ENCODE measurements at regions of chr3 and their contacts with region 1.

Region 1: DNA sequence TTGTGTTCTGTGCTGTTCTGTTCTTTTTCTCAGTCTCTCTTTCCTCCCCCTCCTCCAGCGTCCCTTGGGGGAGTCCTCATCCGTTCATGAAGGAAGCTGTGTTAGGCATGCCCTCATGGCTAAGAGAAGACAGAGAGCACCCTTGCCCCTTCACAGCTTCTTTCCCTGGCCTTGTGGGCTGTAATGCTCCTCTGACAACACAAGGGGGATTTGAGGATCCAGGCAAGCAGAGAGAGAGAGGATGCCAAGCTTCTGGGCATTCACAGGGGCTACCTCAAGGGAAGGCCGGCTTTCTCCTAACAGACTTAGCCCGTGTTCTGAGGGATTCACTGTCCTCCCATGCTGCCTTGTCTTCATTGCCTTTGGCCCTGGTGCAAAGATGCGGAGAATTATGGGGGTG is 389.5 kb downstream of the LRTM1 start:
- DNase-seq: no peak
- H3K4me3 ChIP-seq: no peak overlapping the region
- H3K27ac ChIP-seq: no peak overlapping the region
- H3K4me1 ChIP-seq: no peaks in the 10 kb centered on the region
- H3K27me3 ChIP-seq: no peaks in the 10 kb centered on the region
- CTCF ChIP-seq: no peak
- EP300 ChIP-seq: no peak
- POLR2A ChIP-seq: no peak

Region 2: GRCh38 chr3:54476864-54477263 is 61.5 kb before region 1 on chr3:
- in situ Hi-C with region 1: no loop called
- intact Hi-C with region 1: no loop called
- DNase-seq: no peak
- H3K4me3 ChIP-seq: no peak overlapping the region
- H3K27ac ChIP-seq: no peak overlapping the region
- H3K4me1 ChIP-seq: no peaks in the 10 kb centered on the region
- H3K27me3 ChIP-seq: no peaks in the 10 kb centered on the region
- CTCF ChIP-seq: no peak
- EP300 ChIP-seq: no peak
- POLR2A ChIP-seq: no peak

Region 3: DNA sequence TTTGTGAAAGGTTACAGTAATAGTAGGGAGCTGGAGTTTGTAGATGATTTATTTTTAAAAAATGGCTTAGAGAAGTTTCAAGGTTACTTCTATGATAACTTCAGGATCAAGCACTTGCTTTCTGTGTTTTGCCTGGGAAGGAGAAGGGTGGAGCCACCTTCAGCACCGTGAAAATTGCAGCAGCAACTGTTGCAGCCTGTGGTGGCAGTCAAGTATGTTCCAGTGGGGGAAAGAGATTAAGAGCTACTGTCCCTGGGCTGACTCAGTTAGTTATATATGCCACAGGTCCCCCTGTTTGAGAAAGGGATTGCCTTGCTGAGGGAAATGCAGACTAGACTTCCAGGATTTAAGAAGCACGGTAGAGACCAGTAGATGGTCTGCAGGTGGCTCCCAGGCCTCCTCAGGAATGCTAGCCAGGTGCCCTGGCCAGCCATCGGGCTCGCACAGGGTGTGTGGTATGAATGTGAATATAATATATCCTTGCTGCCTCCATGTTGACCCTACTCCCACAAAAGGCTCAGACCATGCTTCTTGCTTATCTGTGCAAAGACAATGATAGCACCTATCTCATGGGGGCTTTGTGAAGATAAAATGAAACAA is 26.5 kb before region 1 on chr3:
- in situ Hi-C with region 1: no loop called
- intact Hi-C with region 1: loop called (anchors 1 kb)
- DNase-seq: no peak
- H3K4me3 ChIP-seq: no peak overlapping the region
- H3K27ac ChIP-seq: no peak overlapping the region
- H3K4me1 ChIP-seq: no peaks in the 10 kb centered on the region
- H3K27me3 ChIP-seq: no peaks in the 10 kb centered on the region
- CTCF ChIP-seq: no peak
- EP300 ChIP-seq: no peak
- POLR2A ChIP-seq: no peak

Region 4: GRCh38 chr3:54557541-54558419 is 19.4 kb after region 1 on chr3:
- in situ Hi-C with region 1: no loop called
- intact Hi-C with region 1: loop called (anchors 1 kb)
- DNase-seq: no peak
- H3K4me3 ChIP-seq: no peak overlapping the region
- H3K27ac ChIP-seq: no peak overlapping the region
- H3K4me1 ChIP-seq: no peaks in the 10 kb centered on the region
- H3K27me3 ChIP-seq: no peaks in the 10 kb centered on the region
- CTCF ChIP-seq: no peak
- EP300 ChIP-seq: no peak
- POLR2A ChIP-seq: no peak

Region 5: DNA sequence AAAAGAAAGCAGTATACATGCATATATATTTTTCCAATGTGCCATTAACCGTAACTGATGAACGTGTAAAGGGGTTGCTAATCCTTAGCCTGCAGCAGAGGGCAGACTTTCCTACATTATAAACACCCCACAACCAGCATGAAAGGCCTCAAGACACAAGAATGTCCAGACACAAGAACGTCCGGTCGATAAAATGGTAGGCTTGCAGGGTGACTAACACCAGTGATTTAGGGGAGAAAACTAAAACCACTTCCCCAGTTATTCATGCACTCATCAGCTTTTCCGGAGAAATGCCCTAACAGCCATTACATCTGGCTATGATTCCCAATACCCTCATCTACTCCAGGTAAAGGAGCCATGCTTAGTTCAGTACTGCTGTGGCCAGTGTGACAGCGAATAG is 332.1 kb after region 1 on chr3:
- in situ Hi-C with region 1: no loop called
- intact Hi-C with region 1: no loop called
- DNase-seq: no peak
- H3K4me3 ChIP-seq: no peak overlapping the region
- H3K27ac ChIP-seq: no peak overlapping the region
- H3K4me1 ChIP-seq: no peaks in the 10 kb centered on the region
- H3K27me3 ChIP-seq: no peaks in the 10 kb centered on the region
- CTCF ChIP-seq: peak in 4 of 5 experiments; percentile 17 to 43 (median 30)
- EP300 ChIP-seq: no peak
- POLR2A ChIP-seq: no peak

Measured in transverse colon (tissue), 4 donors.